Psoas muscle (tissue), 8 donors: ENCODE measurements at regions of chr11 and their contacts with region 1.

Region 1: GRCh38 chr11:68370211-68371111 is 58.1 kb downstream of the LRP5 start:
- DNase-seq: no peak
- ATAC-seq: peak; percentile 48 to 81 (median 56)
- H3K4me3 ChIP-seq: no peak overlapping the region
- H3K27ac ChIP-seq: peak overlapping the region; percentile 65
- H3K4me1 ChIP-seq: peaks cover 47% of the 10 kb centered on the region
- H3K27me3 ChIP-seq: no peaks in the 10 kb centered on the region
- CTCF ChIP-seq: no peak

Region 2: DNA sequence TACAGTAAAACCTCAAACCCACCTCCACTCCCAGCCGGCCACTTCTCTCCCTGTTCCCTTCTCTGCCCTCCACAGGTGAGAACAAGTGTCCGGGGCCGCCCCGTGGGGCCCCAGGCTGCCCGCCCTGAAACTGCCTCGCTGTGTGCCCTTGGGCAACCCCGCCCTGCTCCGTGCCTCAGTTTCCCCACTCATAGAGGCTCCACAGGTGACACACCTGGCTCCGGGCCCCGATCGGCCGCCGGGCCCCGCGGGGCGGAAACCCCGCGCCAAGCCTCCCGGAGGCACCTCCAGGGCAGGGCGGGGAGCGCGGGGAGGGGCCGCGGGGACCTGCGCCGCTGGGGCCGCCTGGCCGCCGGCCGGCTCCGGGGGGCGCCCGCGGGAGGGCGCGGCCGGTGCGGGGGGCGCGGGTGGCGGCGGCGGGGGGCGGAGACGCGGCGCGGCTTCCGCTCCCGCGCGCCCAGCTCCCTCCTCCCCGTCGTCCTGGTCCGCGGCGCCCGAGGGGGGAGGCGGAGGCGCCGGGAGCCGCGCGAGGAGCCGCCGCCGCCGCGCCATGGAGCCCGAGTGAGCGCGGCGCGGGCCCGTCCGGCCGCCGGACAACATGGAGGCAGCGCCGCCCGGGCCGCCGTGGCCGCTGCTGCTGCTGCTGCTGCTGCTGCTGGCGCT is 58.2 kb before region 1 on chr11 and contains the start of gene LRP5:
- intact Hi-C with region 1: loop called in 1 of 2 experiments (anchors 5 kb)
- DNase-seq: no peak
- ATAC-seq: peak in 2 of 4 donors; percentile 14 to 26
- H3K4me3 ChIP-seq: peak within 1 kb of the TSS; percentile 79
- H3K27ac ChIP-seq: peak within 1 kb of the TSS; percentile 83
- H3K4me1 ChIP-seq: peaks cover 42% of the 10 kb centered on the region
- H3K27me3 ChIP-seq: no peaks in the 10 kb centered on the region
- CTCF ChIP-seq: no peak
- total RNA-seq, gene LRP5: 16.7 to 19.2 (median 17.9) TPM

Region 3: DNA sequence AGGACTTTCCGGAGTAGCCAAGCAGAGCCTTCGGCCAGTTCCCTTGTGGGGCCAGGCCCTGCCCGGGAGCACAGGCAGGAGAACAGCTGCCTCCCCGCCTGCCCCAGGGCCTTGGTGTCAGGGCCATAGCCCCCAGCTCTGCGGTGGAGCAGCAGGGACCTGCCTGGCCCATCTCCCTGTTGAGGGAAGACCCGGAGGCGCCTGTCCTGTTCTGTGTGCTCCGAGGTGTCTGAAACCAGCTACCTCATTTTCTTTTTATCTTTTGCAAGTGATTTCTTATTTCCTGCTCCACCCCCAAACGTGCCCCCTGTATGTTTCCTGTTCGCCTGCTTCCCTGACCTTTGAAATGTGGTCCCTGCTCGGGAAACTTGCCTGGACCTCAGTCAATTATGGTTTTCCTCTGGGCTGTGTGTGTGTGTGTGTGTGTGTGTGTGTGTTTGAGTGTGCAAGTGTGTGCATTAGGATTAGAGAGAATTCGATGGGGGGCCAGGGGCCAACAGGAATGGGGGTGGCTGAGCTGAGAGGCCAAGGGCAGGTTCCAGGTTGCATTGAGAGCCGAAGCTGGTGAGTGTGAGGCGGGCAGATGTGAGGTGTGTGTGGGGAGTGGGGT is 39.0 kb before region 1 on chr11:
- intact Hi-C with region 1: loop called in 1 of 2 experiments (anchors 5 kb)
- DNase-seq: no peak
- ATAC-seq: no peak
- H3K4me3 ChIP-seq: no peak overlapping the region
- H3K27ac ChIP-seq: peak overlapping the region; percentile 16
- H3K4me1 ChIP-seq: peaks cover 37% of the 10 kb centered on the region
- H3K27me3 ChIP-seq: no peaks in the 10 kb centered on the region
- CTCF ChIP-seq: no peak

Region 4: DNA sequence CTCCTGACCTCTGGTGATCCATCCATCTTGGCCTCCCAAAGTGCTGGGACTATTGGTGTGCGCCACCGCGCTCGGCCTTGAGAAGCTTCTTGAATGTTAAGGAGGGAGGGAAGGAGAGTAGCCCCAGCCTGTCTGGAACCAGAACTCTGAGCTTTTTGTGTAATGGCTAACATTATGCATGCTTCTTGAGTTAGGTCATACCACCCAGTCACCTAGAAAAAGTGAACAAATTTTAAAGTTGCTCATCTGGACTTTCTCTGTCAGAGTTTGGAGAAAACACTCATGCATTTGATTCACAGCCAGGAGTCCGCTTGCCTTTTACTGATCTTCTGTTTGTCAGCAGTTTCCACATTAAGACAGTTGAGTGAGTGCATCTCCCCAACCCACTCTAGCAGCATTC is 172.2 kb after region 1 on chr11:
- intact Hi-C with region 1: no loop called
- DNase-seq: no peak
- ATAC-seq: peak in 2 of 4 donors; percentile 26 to 31
- H3K4me3 ChIP-seq: no peak overlapping the region
- H3K27ac ChIP-seq: no peak overlapping the region
- H3K4me1 ChIP-seq: peaks cover 61% of the 10 kb centered on the region
- H3K27me3 ChIP-seq: no peaks in the 10 kb centered on the region
- CTCF ChIP-seq: no peak

Region 5: DNA sequence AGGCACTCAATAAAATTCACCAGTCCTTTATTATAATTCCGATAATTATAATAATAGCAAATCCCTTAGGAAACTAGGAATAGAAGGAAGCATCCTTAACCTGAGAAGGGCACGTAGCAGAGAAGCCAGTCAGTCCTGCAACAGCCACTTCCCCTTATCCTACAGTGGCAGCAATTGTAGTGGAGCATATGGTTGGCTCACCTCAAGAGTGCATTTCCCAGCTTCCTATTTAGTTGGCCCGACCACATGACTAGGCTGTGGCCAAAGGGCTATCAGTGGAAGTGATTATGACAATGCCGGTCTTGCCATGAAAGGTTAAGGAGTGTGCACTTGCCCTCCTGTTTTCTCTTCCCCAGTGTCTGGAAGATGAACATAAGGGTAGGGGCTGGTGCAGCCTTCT is 353.8 kb after region 1 on chr11:
- intact Hi-C with region 1: no loop called
- DNase-seq: no peak
- ATAC-seq: no peak
- H3K4me3 ChIP-seq: no peak overlapping the region
- H3K27ac ChIP-seq: no peak overlapping the region
- H3K4me1 ChIP-seq: no peaks in the 10 kb centered on the region
- H3K27me3 ChIP-seq: peaks cover 1 to 14% (median 2%) of the 10 kb centered on the region in 3 donors
- CTCF ChIP-seq: no peak